Activated CD4-positive, alpha-beta memory T cell treated with anti-CD3 and anti-CD28 coated beads for 36 hours (primary cell): ENCODE measurements at regions of chr17 and their contacts with region 1.

Region 1: DNA sequence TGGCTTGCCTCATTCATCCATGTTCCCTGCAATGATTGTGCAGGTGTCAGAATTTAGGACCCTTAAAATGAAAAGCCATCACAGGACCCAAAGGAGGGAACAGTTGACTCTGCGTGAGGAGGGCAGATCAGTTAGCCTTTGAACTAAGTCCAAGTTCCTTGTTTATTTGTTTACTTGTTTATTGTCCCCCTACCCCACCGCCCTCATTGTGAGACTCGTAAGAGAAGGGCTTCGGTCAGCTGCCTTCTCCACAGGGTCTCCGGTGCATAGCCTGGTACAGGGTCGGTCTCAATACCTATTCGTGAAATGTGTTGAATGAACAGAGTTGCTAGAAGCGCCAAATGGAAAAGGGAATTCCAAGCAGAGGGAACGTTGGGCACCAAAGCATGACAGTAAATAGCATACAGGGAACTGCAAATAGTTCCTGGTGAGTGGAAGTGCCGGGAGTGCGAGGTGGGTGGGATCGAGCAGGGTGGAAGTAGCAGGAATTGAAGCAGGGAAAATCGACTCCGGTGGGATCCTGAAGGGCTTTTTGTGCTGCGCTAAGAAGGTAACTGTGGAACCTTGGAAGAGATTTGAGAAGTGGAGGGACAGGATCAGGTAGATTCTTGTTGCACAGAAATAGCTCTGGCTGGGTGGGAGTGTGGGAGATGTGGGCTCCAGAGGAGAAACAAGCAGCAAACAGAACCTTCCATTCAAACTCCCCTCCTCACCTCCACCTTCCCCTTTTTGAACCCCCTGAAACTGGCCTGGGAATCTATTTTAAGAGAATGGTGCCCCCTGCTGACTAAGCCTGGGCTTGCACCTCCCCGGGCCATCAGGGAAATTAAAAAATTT is 12.7 kb downstream of the SLC35B1 start:
- DNase-seq: peak; percentile 84
- H3K4me3 Mint-ChIP-seq: no peak overlapping the region
- H3K27ac Mint-ChIP-seq: peak overlapping the region; percentile 81
- H3K4me1 Mint-ChIP-seq: peaks cover 28% of the 10 kb centered on the region
- H3K27me3 Mint-ChIP-seq: no peaks in the 10 kb centered on the region

Region 2: GRCh38 chr17:49567871-49568694 is 127.0 kb before region 1 on chr17:
- CTCF ChIA-PET with region 1: interaction called, 564 read pairs
- POLR2A ChIA-PET with region 1: interaction called, 4 read pairs
- intact Hi-C with region 1: loop called (anchors 1 kb)
- DNase-seq: peak; percentile 90
- H3K4me3 Mint-ChIP-seq: peak overlapping the region; percentile 67
- H3K27ac Mint-ChIP-seq: no peak overlapping the region
- H3K4me1 Mint-ChIP-seq: peaks cover 16% of the 10 kb centered on the region
- H3K27me3 Mint-ChIP-seq: peaks cover 14% of the 10 kb centered on the region

Region 3: DNA sequence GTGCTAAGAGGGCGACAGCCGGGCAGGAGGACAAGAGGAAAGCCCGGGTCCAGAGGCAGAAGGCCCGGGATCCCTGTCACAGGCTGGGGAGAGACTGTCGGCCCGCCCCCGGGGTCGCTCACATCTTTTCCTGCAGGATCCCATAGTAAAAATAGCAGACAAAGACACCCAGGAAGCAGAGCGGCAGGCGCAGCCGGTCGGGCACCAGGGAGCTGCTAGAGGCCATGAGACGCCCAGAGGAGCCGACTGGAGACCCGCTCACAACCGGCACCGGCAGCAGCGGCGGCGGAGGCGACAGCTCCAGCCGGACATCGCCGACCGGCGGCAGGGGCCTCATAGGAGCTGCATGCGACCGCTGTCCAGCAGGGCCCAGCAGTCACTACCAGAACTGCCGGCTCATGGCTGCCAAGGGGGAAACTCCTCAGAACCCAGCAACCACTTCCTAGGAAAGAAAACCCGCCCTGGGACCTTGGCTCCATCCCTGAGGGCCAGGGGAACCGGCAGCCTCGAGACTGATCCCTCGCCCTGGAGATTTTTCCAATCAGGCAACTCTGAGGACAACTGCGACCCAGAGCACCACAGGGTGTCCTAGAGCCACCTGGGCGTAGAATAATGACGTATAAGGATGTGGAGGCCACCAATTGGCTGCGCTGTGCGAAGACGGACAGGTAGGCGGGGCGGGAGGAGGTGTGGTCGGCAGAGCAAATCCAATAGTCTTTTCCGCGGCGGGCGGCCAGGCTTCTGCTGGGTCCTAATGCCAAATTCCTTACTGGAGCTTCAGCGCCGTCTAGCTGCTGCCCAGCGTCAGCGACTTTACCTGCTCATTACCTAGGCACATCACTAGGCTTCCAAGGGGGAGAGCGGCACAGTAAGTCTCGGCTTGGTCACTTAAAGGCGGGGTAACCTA is 12.8 kb after region 1 on chr17 and contains the start of gene SLC35B1:
- CTCF ChIA-PET with region 1: interaction called, 68 read pairs
- POLR2A ChIA-PET with region 1: interaction called, 7 read pairs
- intact Hi-C with region 1: loop called (anchors 1 kb)
- DNase-seq: peak; percentile 99
- H3K4me3 Mint-ChIP-seq: peak within 1 kb of the TSS; percentile 91
- H3K27ac Mint-ChIP-seq: peak within 1 kb of the TSS; percentile 98
- H3K4me1 Mint-ChIP-seq: peaks cover 42% of the 10 kb centered on the region
- H3K27me3 Mint-ChIP-seq: no peaks in the 10 kb centered on the region
- total RNA-seq, gene SLC35B1: 48.3 to 54.1 TPM

Region 4: GRCh38 chr17:49748791-49749190 is 53.7 kb after region 1 on chr17:
- CTCF ChIA-PET with region 1: interaction called, 12 read pairs
- POLR2A ChIA-PET with region 1: interaction called, 4 read pairs
- intact Hi-C with region 1: no loop called
- DNase-seq: peak; percentile 80
- H3K4me3 Mint-ChIP-seq: peak overlapping the region; percentile 33
- H3K27ac Mint-ChIP-seq: peak overlapping the region; percentile 94
- H3K4me1 Mint-ChIP-seq: peaks cover 81% of the 10 kb centered on the region
- H3K27me3 Mint-ChIP-seq: no peaks in the 10 kb centered on the region

Region 5: GRCh38 chr17:49851387-49852291 is 156.6 kb after region 1 on chr17:
- CTCF ChIA-PET with region 1: interaction called, 12 read pairs
- POLR2A ChIA-PET with region 1: no interaction called
- intact Hi-C with region 1: loop called (anchors 2 kb)
- DNase-seq: peak; percentile 76
- H3K4me3 Mint-ChIP-seq: peak overlapping the region; percentile 76
- H3K27ac Mint-ChIP-seq: peak overlapping the region; percentile 73
- H3K4me1 Mint-ChIP-seq: peaks cover 9% of the 10 kb centered on the region
- H3K27me3 Mint-ChIP-seq: no peaks in the 10 kb centered on the region